ENCODE measurements at regions of chr5 and their contacts with region 1.

Region 1: GRCh38 chr5:137320056-137321045 is 178.8 kb downstream of the SPOCK1 start:
- DNase-seq: peak; percentile 29
- H3K4me3 Mint-ChIP-seq: no peak overlapping the region
- H3K27ac Mint-ChIP-seq: no peak overlapping the region
- H3K4me1 Mint-ChIP-seq: no peaks in the 10 kb centered on the region
- H3K27me3 Mint-ChIP-seq: peaks cover 9% of the 10 kb centered on the region

Region 2: DNA sequence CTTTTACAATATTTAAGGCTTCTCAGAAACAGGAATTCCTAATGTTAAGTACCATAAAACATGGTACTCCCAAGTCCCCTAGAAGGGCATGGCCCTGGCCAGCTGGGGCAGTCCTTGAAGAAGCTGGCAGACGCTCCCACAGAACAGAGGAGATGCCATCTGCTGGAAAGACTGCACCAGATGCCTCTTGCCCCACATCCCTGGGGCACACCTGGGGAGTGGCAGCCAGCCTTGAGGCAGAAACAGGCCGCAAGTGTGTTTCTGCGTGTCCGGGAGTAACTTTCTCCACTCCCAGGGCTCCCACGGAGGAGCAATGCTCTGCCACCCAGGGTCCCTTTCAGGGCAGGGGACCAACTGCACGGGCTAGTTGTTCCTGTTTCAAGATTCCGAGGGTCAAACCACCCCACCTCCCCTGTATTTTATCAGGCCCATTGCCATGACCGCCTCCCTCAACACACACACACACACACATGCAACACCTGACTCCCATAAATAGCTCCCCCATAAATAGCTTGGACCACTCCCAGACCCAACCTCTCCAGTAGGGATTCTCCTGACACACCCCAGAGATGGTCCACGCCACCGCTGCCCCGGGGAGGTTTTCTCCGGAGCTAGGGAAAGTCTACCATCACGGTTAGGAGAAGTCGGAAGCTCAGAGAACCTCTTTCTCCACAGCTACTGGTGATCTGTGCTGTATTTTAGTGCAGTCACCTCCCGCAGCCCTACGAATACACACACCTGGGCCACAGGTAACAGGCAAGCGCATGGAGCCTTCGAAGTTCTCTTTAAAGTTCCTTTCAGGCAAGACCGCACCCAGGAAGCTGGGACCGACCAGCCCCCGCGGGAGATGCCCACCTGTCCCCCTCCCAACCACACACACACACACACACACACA is 177.3 kb after region 1 on chr5:
- CTCF ChIA-PET with region 1: interaction called, 17 read pairs
- DNase-seq: no peak
- H3K4me3 Mint-ChIP-seq: no peak overlapping the region
- H3K27ac Mint-ChIP-seq: no peak overlapping the region
- H3K4me1 Mint-ChIP-seq: no peaks in the 10 kb centered on the region
- H3K27me3 Mint-ChIP-seq: peaks cover 32% of the 10 kb centered on the region

Region 3: DNA sequence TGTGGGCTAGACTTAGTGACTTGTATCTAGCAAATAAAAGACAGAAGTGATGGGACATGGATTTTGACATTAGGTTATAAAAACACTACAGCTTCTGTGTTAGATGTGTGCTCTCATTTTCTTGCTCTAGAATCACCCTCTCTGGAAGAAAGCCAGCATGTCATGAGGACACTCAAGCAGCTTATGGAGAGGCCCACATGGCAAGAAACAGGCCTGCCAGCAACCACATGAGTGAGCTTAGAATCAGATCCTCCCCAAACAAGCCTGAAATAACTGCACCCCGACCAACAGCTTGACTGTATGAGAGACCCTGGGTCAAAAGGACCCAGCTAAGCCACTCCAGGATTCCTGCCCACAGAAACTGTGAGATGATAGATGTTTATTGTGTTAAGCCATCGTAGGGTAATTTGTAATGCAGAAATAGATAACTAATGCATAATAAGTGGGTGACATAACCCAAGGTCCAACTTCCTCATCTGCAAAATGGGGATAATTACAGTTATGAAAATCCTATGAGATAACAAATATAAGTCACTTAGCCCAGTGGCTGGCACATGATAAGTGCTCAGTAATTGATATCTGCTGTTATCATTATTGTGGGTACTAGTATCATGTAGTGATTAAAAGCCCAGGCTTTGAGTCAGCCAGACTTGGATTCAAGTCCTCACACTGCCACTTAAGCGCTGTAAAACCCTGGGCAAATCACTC is 329.0 kb after region 1 on chr5:
- CTCF ChIA-PET with region 1: no interaction called
- DNase-seq: no peak
- H3K4me3 Mint-ChIP-seq: no peak overlapping the region
- H3K27ac Mint-ChIP-seq: no peak overlapping the region
- H3K4me1 Mint-ChIP-seq: no peaks in the 10 kb centered on the region
- H3K27me3 Mint-ChIP-seq: no peaks in the 10 kb centered on the region